Heart right ventricle (tissue), 16 donors: ENCODE measurements at regions of chr4 and their contacts with region 1.

Region 1: DNA sequence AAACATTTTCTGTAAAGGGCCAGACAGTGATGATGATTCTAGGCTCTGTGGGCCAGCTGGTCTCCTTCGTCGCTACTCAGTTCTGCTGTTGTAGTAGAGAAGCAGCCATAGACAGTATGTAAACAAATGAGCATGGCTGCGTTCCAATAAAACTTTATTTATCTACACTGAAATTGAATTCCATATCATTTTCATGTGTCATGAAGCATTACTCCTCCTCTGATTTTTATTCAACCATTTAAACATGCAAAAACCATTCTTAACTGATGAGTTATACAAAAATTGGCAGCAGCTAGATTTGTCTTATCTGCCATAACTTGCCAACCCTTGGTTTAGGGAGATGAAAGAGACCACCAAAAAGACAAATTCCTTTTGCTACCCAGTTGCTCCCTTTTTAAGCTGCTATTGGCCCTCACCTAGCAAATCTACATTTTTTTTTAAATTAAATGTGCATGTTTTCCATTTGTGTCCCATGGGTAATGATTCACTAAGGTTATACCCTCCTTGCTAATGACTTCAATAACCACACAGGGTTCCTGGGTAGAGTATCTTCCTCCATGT is 309.9 kb downstream of the DHX15 start:
- DNase-seq: no peak
- ATAC-seq: no peak
- H3K4me3 ChIP-seq: no peak overlapping the region
- H3K27ac ChIP-seq: no peak overlapping the region
- H3K4me1 ChIP-seq: peaks cover 0 to under 1% (median 0%) of the 10 kb centered on the region in 9 donors
- H3K27me3 ChIP-seq: no peaks in the 10 kb centered on the region
- CTCF ChIP-seq: no peak

Region 2: DNA sequence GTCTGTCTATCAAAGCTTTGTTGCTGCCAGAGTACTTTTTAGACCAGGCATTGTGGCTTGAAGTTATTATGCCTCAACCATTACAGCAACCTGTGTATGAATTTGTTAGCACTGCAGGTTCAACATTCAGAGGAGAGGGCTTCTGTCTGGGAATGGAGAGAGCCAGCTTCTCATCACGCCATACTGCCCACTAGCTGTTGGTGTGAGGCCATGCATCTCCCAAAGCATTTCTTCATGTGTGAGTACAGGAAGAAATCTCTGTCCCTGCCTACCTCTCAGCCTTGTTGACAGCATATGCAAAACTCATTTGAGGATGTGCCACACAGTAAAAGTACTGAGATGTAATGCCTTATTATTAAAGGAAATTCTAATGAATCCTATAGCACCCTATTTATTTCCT is 307.7 kb before region 1 on chr4:
- intact Hi-C with region 1: no loop called
- DNase-seq: no peak
- ATAC-seq: no peak
- H3K4me3 ChIP-seq: no peak overlapping the region
- H3K27ac ChIP-seq: no peak overlapping the region
- H3K4me1 ChIP-seq: peaks cover 0 to under 1% (median 0%) of the 10 kb centered on the region in 9 donors
- H3K27me3 ChIP-seq: no peaks in the 10 kb centered on the region
- CTCF ChIP-seq: peak in 6 of 9 donors; percentile 18 to 30 (median 20)

Region 3: DNA sequence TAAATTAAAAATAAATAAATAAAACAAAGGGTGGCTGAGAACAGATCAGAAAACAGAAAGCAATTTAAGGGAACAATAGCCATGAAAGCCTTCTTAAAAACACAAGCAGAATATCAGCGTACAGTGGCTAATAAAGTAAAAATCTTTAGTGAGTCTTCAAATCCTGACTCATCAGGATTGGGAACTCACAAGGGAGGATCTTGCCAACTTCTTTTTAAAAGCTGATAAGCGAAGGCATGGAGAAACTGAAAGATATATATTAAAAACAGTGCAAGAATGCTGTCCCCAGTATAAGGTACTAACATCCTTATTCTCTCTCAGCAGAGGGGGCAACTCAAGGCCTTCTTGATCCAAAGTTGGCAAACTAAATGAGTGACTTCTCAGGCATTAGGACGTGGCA is 129.8 kb after region 1 on chr4:
- intact Hi-C with region 1: loop called in 1 of 10 experiments (anchors 10 kb)
- DNase-seq: no peak
- ATAC-seq: no peak
- H3K4me3 ChIP-seq: no peak overlapping the region
- H3K27ac ChIP-seq: no peak overlapping the region
- H3K4me1 ChIP-seq: no peaks in the 10 kb centered on the region
- H3K27me3 ChIP-seq: no peaks in the 10 kb centered on the region
- CTCF ChIP-seq: no peak